Activated CD4-positive, alpha-beta memory T cell treated with anti-CD3 and anti-CD28 coated beads, Interleukin-2, amount 10 ng/mL, durations not matched to agents 7 days and 5 days (primary cell): ENCODE measurements at regions of chr11 and their contacts with region 1.

Region 1: DNA sequence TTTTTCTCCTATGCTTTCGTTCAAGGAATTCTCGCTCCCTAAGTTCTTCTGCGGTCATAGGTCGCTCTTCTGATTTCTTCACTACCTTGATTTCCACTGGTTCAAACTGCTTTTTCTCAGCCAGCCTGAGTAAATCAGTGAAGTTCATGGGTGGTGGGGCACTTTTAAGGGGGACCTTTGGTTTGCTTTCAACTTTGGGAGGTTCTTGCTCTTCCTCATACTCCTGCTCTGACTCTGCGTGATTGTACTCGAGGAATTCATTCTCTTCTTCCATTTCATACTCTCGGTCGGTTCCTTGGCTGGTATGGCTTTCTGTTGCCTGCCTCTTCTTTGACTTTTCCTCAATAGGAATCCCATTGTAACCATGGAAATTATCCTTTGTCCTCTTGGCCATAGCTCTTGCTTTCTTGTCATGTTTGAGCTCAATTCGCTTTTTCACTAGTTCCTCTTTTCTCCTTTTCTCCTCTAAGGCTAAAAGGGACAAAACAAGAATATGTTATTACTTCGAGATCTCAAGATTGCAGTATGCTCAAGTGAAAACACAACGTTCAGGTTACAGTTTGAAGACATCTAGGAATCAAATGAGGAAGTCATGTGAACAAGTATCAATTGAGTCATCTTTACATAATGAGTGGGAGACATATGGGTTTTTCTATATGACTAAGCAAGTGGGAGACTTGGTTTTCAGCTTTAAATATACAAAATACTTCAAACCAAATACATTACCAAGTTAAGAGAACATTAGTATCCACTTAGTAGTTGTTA is 16.2 kb downstream of the MISFA start:
- DNase-seq: no peak
- H3K4me3 Mint-ChIP-seq: peak overlapping the region; percentile 12
- H3K27ac Mint-ChIP-seq: peak overlapping the region; percentile 57
- H3K4me1 Mint-ChIP-seq: peaks cover 52% of the 10 kb centered on the region
- H3K27me3 Mint-ChIP-seq: no peaks in the 10 kb centered on the region

Region 2: DNA sequence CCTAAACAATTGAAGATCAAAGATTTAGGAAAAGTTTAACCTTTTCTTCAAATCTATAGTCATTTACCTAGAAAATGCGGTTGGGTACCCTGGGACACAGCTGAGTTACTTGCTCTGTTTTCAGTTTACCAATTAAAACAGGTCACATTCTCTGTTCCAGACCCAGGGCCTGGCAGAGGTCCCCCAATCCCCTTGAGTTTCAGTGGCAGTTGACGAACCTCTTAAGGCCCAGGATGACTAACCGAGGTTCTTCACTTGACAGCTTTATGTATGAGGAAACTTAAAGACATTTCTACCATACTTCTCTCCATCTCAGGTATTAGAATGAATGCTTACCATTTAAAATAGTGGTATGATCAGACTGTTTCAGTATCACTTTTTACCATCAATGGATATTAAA is 143.8 kb before region 1 on chr11:
- CTCF ChIA-PET with region 1: no interaction called
- POLR2A ChIA-PET with region 1: no interaction called
- DNase-seq: no peak
- H3K4me3 Mint-ChIP-seq: no peak overlapping the region
- H3K27ac Mint-ChIP-seq: no peak overlapping the region
- H3K4me1 Mint-ChIP-seq: peaks cover 9% of the 10 kb centered on the region
- H3K27me3 Mint-ChIP-seq: no peaks in the 10 kb centered on the region

Region 3: DNA sequence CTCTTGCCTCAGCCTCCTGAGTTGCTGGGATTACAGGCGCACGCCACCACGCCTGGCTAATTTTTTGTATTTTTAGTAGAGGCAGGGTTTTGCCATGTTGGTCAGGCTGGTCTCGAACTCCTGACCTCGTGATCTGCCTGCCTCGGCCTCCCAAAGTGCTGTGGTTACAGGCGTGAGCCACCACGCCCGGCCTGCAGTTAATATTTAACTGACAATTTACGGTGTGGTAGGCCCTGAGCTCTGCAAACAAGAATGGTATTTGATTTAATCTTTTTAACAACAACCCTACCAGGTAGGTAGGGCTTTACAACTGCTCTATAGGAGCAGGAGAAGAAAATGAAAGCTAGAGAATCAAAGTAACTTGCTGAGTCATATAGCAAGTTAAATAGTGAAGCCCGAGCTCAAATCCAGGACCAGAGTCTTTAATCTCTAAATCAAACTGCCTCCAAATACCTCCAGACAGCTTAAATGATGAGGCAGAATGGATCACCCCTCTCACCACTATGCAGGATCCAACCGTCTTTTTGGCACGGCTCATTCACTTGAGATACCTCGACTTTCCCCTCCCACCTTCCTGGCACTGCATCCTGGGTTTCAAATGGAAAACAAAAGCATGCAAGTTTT is 36.7 kb before region 1 on chr11:
- CTCF ChIA-PET with region 1: interaction called, 3 read pairs
- POLR2A ChIA-PET with region 1: interaction called, 22 read pairs
- DNase-seq: peak; percentile 40
- H3K4me3 Mint-ChIP-seq: peak overlapping the region; percentile 59
- H3K27ac Mint-ChIP-seq: peak overlapping the region; percentile 60
- H3K4me1 Mint-ChIP-seq: peaks cover 45% of the 10 kb centered on the region
- H3K27me3 Mint-ChIP-seq: no peaks in the 10 kb centered on the region

Region 4: DNA sequence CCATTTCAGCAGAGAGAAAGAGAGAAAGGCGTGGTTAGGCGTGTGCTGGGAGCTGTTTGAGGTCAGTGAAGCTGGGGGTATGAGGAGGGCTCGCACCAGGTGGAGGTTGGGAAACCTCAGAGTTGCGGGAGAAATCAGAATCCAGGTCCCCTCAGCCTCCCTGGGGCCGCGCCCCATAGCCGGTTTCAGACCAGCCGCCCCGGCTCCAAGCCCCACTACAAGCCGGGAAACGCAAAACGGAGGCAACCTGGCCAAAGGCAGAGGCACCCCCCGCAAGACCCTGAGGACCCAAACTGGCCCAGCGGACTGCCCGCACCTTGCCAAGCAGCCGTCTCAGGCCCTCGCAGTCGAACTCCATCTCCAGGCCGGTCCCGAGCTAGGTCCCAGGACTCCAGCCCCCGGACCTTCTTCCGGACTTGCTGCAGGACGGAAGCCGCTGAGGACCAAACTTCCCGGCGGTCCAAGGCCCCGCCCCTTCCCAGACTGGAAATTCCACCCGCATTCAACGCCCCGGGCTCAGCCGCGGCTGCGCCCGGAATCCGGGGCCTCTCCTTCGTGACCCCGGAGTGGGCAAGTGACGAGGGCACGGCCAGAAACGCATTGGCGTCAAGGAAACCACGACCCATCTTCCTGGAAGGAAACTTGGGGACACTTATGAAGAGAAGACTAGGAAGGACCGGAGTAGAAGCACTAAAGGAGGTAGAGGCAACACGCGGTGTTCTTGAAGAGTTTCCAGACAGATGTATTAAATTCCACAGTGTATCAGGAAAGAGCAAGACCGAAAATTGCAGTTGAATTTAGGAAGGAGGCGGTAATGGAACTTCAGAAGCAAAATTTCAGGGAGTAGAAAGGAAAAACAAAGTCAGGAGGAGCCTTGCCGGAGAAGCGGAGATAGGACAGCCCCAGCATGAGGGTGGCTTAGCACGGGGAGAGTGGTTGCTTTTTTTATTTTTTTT is 27.2 kb before region 1 on chr11 and contains the start of gene UEVLD:
- CTCF ChIA-PET with region 1: interaction called, 3 read pairs
- POLR2A ChIA-PET with region 1: interaction called, 68 read pairs
- DNase-seq: peak; percentile 68
- H3K4me3 Mint-ChIP-seq: no peak within 1 kb of the TSS
- H3K27ac Mint-ChIP-seq: no peak within 1 kb of the TSS
- H3K4me1 Mint-ChIP-seq: peaks cover 2% of the 10 kb centered on the region
- H3K27me3 Mint-ChIP-seq: no peaks in the 10 kb centered on the region
- total RNA-seq, gene UEVLD: 23.3 to 26.1 TPM

Region 5: DNA sequence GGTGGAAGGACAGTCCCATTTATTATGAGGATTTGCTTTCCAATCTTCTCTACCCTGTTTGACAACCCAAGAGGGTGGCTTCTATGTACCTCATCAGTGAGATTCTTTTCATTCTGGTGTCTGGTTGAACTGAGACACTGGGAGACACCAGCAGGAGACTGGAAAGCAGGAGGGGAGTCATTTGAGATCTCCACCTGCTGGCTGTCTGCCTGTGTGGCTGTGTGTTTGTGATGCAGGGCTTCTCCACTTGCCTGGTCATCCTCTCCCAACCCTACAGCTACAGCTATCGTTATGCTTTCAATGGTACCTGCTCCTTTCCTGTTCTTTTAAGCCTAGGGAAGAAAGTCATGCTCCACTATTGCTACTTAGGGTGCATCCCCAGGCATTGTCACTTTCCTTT is 274.8 kb after region 1 on chr11:
- CTCF ChIA-PET with region 1: no interaction called
- POLR2A ChIA-PET with region 1: no interaction called
- DNase-seq: no peak
- H3K4me3 Mint-ChIP-seq: no peak overlapping the region
- H3K27ac Mint-ChIP-seq: no peak overlapping the region
- H3K4me1 Mint-ChIP-seq: no peaks in the 10 kb centered on the region
- H3K27me3 Mint-ChIP-seq: peaks cover 24% of the 10 kb centered on the region

Region 6: GRCh38 chr11:19101796-19102520 is 486.1 kb after region 1 on chr11:
- CTCF ChIA-PET with region 1: no interaction called
- POLR2A ChIA-PET with region 1: no interaction called
- DNase-seq: no peak
- H3K4me3 Mint-ChIP-seq: no peak overlapping the region
- H3K27ac Mint-ChIP-seq: no peak overlapping the region
- H3K4me1 Mint-ChIP-seq: no peaks in the 10 kb centered on the region
- H3K27me3 Mint-ChIP-seq: peaks cover 11% of the 10 kb centered on the region